ENCODE measurements at regions of chr2 and their contacts with region 1.

Region 1: GRCh38 chr2:202178342-202178958 is 59.9 kb downstream of the SUMO1 start:
- DNase-seq: peak in 4 of 5 donors; percentile 44 to 77 (median 48)
- H3K4me3 ChIP-seq: no peak overlapping the region
- H3K27ac ChIP-seq: no peak overlapping the region
- H3K4me1 ChIP-seq: no peaks in the 10 kb centered on the region
- H3K27me3 ChIP-seq: no peaks in the 10 kb centered on the region
- CTCF ChIP-seq: peak; percentile 51 to 78 (median 71)
- EP300 ChIP-seq: no peak
- POLR2A ChIP-seq: no peak

Region 2: GRCh38 chr2:201795607-201796477 is 382.6 kb before region 1 on chr2:
- intact Hi-C with region 1: loop called in 3 of 4 experiments (anchors 1 to 5 kb)
- DNase-seq: peak in 4 of 5 donors; percentile 45 to 47 (median 46)
- H3K4me3 ChIP-seq: no peak overlapping the region
- H3K27ac ChIP-seq: no peak overlapping the region
- H3K4me1 ChIP-seq: no peaks in the 10 kb centered on the region
- H3K27me3 ChIP-seq: no peaks in the 10 kb centered on the region
- CTCF ChIP-seq: peak; percentile 17 to 65 (median 65)
- EP300 ChIP-seq: no peak
- POLR2A ChIP-seq: no peak